Transverse colon (tissue), 4 donors: ENCODE measurements at regions of chr2 and their contacts with region 1.

Region 1: GRCh38 chr2:109466673-109467575 is 146.8 kb downstream of the SEPTIN10 start:
- DNase-seq: peak; percentile 2
- H3K4me3 ChIP-seq: no peak overlapping the region
- H3K27ac ChIP-seq: no peak overlapping the region
- H3K4me1 ChIP-seq: peaks cover 0 to 19% (median 7%) of the 10 kb centered on the region in 4 donors
- H3K27me3 ChIP-seq: no peaks in the 10 kb centered on the region
- CTCF ChIP-seq: no peak
- EP300 ChIP-seq: no peak
- POLR2A ChIP-seq: no peak

Region 2: GRCh38 chr2:109497911-109498870 is 31.3 kb after region 1 on chr2:
- in situ Hi-C with region 1: no loop called
- intact Hi-C with region 1: loop called (anchors 1 kb)
- DNase-seq: no peak
- H3K4me3 ChIP-seq: no peak overlapping the region
- H3K27ac ChIP-seq: peak overlapping the region in 2 of 4 donors; percentile 30 to 73
- H3K4me1 ChIP-seq: peaks cover 6 to 32% (median 22%) of the 10 kb centered on the region in 4 donors
- H3K27me3 ChIP-seq: no peaks in the 10 kb centered on the region
- CTCF ChIP-seq: no peak
- EP300 ChIP-seq: no peak
- POLR2A ChIP-seq: no peak